Posterior cingulate gyrus (tissue), 11 donors: ENCODE measurements at regions of chr2 and their contacts with region 1.

Region 1: GRCh38 chr2:183078465-183079138 is at the start of gene DUSP19:
- DNase-seq: peak; percentile 56 to 97 (median 88)

Region 2: GRCh38 chr2:182715896-182716668 is 362.5 kb before region 1 on chr2 and contains the start of gene DNAJC10:
- intact Hi-C with region 1: loop called (anchors 5 kb)
- DNase-seq: peak; percentile 81 to 98 (median 88)

Region 3: DNA sequence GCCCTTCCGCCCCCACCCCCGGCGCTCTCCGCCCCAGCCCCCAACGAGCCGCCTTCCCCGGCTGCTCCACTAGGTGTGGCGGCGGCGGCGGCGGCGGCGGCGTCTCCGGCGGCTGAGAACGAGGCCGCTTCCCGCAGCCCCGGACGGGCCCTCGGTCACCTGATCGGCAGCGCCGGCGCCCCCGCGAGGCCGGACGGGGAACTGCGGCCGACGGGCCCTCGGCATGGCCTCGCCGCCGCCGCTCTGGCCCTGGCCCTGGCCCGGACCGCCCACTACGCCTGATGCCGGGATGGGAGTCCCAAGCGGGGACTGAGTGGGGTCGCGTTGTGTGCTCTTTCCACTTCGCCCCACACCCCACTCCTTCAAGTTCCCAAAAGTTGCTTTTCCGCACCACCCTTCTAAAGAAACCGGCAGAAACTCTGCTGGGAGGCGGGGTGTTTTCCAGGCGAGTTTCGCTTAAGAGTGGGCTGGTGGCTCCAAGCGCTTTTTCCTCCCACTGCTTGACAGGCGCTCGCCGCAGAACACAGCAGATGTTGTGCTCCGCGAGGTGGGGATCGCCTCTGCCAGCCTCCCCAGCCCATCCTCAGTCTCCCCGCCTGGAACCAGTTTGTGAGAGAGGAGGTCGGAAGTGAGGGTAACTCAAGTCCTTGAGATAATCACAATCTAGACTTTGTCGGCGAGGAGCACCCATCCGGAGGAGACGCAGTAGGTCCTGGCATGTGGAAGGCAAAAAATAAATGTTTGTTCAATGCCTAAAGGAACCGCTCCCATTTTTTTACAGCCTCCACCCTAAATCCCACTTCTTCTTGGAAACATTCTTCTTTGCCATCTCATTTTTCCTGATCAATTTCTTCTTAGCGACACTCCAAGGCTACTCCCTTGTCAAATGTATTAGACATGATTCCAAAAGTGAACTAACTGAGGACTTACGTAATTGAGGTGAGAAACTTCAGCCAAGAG is 40.0 kb before region 1 on chr2 and contains the start of gene NCKAP1:
- intact Hi-C with region 1: loop called (anchors 2 kb)
- DNase-seq: peak; percentile 74 to 97 (median 82)

Region 4: GRCh38 chr2:183124222-183124956 is 45.8 kb after region 1 on chr2 and contains the start of gene NUP35:
- intact Hi-C with region 1: loop called (anchors 5 kb)
- DNase-seq: peak; percentile 79 to 97 (median 89)